BJ (cell line): ENCODE measurements at regions of chr12 and their contacts with region 1.

Region 1: DNA sequence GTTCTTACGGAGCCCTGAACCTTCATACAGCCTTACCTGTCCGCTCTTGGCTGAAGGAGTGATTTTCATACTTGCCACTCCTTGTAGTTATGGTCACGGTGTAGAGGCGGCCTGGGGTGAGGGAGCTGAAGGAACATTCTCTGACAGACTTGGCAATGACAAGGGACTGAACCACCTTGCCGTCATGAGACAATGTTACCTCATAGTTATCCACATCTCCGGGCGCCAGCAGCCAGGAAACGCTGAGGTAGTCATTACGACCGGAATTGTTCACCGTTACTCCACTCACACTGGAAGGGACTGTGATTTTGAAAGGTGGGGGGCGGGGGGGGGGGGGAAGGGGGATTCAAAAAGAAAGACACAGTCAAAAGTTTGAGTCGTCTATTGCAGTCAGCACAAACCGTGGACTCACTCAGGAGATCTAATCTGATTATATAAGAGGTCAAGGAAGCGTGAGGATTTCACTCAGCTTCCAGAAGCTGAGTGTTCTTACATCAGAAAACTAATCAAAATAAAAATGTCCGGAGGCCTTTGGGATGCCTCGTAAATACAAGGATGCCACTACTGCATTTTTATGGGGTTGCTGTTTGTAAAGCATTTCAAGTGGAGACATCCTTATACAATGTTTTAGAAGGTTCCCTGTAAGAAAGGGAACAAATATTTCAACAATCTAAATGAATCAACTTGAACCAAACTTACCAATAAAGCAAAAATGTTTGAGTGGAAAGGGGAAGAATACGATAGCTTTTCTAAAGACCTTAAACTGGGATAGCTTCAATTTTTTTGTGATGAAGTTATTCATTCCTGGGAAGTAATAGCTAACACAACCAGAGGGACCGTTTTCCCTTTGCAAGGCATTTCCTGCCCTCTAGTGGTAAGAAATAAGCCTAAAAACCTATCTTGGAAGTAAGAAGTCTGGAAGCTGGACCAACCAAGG is 60.6 kb downstream of the PTPRB start:
- DNase-seq: peak; percentile 87
- H3K4me3 ChIP-seq: no peak overlapping the region
- H3K27me3 ChIP-seq: no peaks in the 10 kb centered on the region
- CTCF ChIP-seq: peak; percentile 76

Region 2: DNA sequence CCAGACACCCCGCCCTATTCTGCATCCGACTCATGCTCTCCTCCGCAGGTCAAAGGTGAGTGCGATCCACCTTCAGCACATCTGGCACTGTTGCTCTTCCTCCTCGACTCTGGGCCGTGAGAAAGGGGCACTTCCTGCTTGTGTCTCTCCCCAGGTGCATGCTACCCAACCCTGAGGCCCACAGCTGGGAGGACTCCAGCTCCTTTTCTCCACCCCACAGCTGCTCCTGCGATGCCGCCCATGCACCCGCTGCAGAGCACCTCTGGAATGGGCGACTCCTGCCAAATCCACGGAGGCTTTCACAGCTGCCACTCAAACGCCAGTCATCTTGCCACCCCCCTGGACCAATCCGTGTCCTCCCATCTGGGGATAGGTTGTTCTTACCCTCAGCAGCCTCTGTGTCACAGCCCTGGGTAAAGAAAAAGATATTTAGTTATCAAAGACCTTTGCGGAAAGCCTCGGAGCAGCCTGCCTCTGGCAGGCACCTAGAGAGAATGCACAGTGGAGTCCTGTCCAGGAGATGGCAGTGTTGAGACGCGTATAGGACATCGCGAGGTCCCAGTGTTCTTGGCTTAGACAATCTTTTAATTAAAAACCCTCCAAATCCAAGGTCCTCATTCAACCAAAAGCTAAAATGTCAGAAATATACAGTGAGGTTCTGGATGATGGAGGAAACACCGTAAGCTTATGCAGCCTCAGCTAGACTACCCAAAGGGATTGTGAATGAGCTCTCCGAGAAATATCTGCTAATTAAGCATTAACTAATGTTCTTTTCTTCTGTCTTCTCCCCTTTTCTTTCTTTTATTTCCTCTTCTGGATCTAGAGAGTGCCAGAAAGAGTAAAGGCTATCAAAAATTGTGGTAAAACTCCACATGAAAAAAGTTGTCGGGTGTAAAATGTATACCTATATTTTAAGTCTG is 697.3 kb before region 1 on chr12:
- CTCF ChIA-PET with region 1: interaction called, 54 read pairs
- POLR2A ChIA-PET with region 1: no interaction called
- DNase-seq: no peak
- H3K4me3 ChIP-seq: peak overlapping the region; percentile 8; the same call in 1 of the 2 replicates
- H3K27me3 ChIP-seq: no peaks in the 10 kb centered on the region
- CTCF ChIP-seq: peak; percentile 87

Region 3: DNA sequence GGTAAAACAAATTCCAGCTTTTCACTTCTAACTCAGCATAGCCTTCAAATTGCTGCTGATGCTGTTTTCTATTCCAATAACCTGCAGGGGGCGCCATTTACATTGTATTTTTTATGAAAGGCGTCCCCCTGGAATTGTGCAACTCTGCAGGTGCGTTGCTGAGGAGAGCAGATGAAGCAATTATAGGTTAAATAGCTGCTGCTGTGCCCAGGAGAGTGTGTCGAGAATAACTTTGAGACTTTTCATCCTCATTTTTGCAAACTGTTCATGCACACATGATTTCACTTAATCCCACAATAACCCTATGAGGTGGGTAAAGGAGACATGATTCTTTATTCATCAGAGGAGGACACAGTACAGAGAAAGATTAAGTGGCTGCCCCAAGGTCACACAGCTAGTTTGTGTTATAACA is 675.9 kb before region 1 on chr12:
- CTCF ChIA-PET with region 1: interaction called, 28 read pairs
- POLR2A ChIA-PET with region 1: no interaction called
- DNase-seq: no peak
- H3K4me3 ChIP-seq: no peak overlapping the region
- H3K27me3 ChIP-seq: no peaks in the 10 kb centered on the region
- CTCF ChIP-seq: peak; percentile 66

Region 4: DNA sequence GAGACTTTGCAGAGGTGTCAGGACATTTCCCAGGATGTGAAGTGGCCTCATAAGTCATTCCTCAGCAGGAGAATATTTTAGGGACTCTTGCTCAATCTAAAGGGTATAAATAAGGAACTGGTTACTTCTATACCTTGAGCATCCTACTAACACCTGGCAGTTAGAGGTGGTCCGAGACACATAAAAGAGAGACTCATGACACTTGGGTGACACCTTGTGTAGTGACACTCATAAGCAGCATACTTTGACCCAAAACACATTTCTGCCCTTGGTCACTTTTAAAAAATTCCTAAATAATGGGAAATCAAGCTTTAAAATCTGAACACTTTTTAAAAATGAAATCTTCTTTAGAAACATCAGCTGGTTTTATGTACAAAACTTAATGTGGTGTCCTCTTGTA is 92.2 kb before region 1 on chr12:
- CTCF ChIA-PET with region 1: no interaction called
- POLR2A ChIA-PET with region 1: interaction called, 35 read pairs
- DNase-seq: no peak
- H3K4me3 ChIP-seq: no peak overlapping the region
- H3K27me3 ChIP-seq: no peaks in the 10 kb centered on the region
- CTCF ChIP-seq: no peak

Region 5: GRCh38 chr12:70598467-70599193 is 22.0 kb after region 1 on chr12:
- CTCF ChIA-PET with region 1: interaction called, 3 read pairs
- POLR2A ChIA-PET with region 1: interaction called, 16 read pairs
- DNase-seq: no peak
- H3K4me3 ChIP-seq: no peak overlapping the region
- H3K27me3 ChIP-seq: no peaks in the 10 kb centered on the region
- CTCF ChIP-seq: no peak